CD4-positive, alpha-beta memory T cell (primary cell): ENCODE measurements at regions of chr6 and their contacts with region 1.

Region 1: GRCh38 chr6:12289933-12290820 is at the start of gene EDN1:
- DNase-seq: peak in 4 of 5 donors; percentile 10 to 33 (median 26)
- H3K4me3 ChIP-seq: peak within 1 kb of the TSS; percentile 36 to 38
- H3K4me3 Mint-ChIP-seq: peak within 1 kb of the TSS; percentile 85 to 93 (median 90)
- H3K27ac ChIP-seq: no peak within 1 kb of the TSS
- H3K27ac Mint-ChIP-seq: peak within 1 kb of the TSS in 1 of 7 donors; percentile 7
- H3K4me1 ChIP-seq: peaks cover 12% of the 10 kb centered on the region
- H3K4me1 Mint-ChIP-seq: peaks cover 13 to 18% (median 15%) of the 10 kb centered on the region in 4 donors
- H3K27me3 ChIP-seq: peaks cover 15% of the 10 kb centered on the region
- H3K27me3 Mint-ChIP-seq: peaks cover 27 to 32% of the 10 kb centered on the region in 2 donors
- total RNA-seq, gene EDN1: 0.15 to 0.28 TPM

Region 2: DNA sequence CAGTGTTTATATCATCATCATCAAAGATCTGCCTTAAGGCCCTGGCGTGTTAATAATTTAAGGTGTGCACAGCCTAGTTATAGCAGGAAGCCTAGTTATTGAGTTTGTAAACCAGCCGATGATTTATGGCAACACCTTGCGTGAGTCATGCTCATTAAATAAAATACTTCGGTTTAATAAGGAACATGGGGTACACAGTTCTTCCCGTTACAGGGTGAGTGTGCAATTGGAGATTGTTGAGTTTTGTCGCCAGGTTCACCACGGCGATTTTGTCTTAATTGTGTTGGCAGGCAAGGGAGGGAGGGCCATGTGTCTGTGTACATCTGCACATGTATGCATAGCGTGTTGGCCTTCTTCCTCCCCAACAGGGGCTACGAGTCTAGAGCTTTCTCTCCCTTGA is 1979.4 kb before region 1 on chr6:
- CTCF ChIA-PET with region 1: no interaction called
- POLR2A ChIA-PET with region 1: no interaction called
- intact Hi-C with region 1: no loop called
- DNase-seq: no peak
- H3K4me3 ChIP-seq: no peak overlapping the region
- H3K4me3 Mint-ChIP-seq: no peak overlapping the region
- H3K27ac ChIP-seq: no peak overlapping the region
- H3K27ac Mint-ChIP-seq: no peak overlapping the region
- H3K4me1 ChIP-seq: no peaks in the 10 kb centered on the region
- H3K4me1 Mint-ChIP-seq: no peaks in the 10 kb centered on the region
- H3K27me3 ChIP-seq: no peaks in the 10 kb centered on the region
- H3K27me3 Mint-ChIP-seq: peaks cover 0 to 2% of the 10 kb centered on the region in 2 donors

Region 3: DNA sequence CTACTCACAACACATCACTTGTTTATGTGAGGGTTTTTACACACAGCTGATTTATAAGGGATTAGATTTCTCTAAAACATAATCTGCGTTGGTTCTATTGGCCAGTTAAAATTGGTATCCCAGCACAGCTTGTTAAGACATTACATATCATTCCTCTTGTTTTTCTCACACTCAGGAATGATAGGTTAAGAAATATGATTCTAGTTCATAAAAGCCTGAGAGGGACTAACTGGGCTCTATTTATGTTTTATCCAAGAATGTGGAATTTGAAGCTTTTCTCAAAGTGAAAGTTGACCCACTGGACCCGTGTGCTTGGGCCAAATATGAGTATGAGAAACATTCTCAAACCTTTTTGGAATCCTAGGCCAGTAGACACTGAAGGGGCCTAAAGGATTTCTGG is 635.3 kb before region 1 on chr6:
- CTCF ChIA-PET with region 1: interaction called, 7 read pairs
- POLR2A ChIA-PET with region 1: no interaction called
- intact Hi-C with region 1: loop called (anchors 1 kb)
- DNase-seq: no peak
- H3K4me3 ChIP-seq: no peak overlapping the region
- H3K4me3 Mint-ChIP-seq: no peak overlapping the region
- H3K27ac ChIP-seq: no peak overlapping the region
- H3K27ac Mint-ChIP-seq: no peak overlapping the region
- H3K4me1 ChIP-seq: no peaks in the 10 kb centered on the region
- H3K4me1 Mint-ChIP-seq: peaks cover 0 to 7% (median 2%) of the 10 kb centered on the region in 4 donors
- H3K27me3 ChIP-seq: no peaks in the 10 kb centered on the region
- H3K27me3 Mint-ChIP-seq: peaks cover 8 to 9% of the 10 kb centered on the region in 2 donors

Region 4: GRCh38 chr6:11700118-11700718 is 590.0 kb before region 1 on chr6:
- CTCF ChIA-PET with region 1: interaction called, 6 read pairs
- POLR2A ChIA-PET with region 1: no interaction called
- intact Hi-C with region 1: loop called (anchors 1 kb)
- DNase-seq: peak in 3 of 5 donors; percentile 38 to 51 (median 42)
- H3K4me3 ChIP-seq: no peak overlapping the region
- H3K4me3 Mint-ChIP-seq: no peak overlapping the region
- H3K27ac ChIP-seq: no peak overlapping the region
- H3K27ac Mint-ChIP-seq: peak overlapping the region in 1 of 7 donors; percentile 41
- H3K4me1 ChIP-seq: no peaks in the 10 kb centered on the region
- H3K4me1 Mint-ChIP-seq: peaks cover 0 to 8% (median 4%) of the 10 kb centered on the region in 4 donors
- H3K27me3 ChIP-seq: no peaks in the 10 kb centered on the region
- H3K27me3 Mint-ChIP-seq: no peaks in the 10 kb centered on the region

Region 5: GRCh38 chr6:12150812-12151432 is 139.3 kb before region 1 on chr6:
- CTCF ChIA-PET with region 1: no interaction called
- POLR2A ChIA-PET with region 1: no interaction called
- intact Hi-C with region 1: loop called (anchors 5 kb)
- DNase-seq: peak in 3 of 5 donors; percentile 20 to 23 (median 23)
- H3K4me3 ChIP-seq: no peak overlapping the region
- H3K4me3 Mint-ChIP-seq: no peak overlapping the region
- H3K27ac ChIP-seq: no peak overlapping the region
- H3K27ac Mint-ChIP-seq: no peak overlapping the region
- H3K4me1 ChIP-seq: peaks cover 8% of the 10 kb centered on the region
- H3K4me1 Mint-ChIP-seq: peaks cover 0 to 16% (median 12%) of the 10 kb centered on the region in 4 donors
- H3K27me3 ChIP-seq: no peaks in the 10 kb centered on the region
- H3K27me3 Mint-ChIP-seq: no peaks in the 10 kb centered on the region

Region 6: GRCh38 chr6:12311106-12311505 is 20.9 kb after region 1 on chr6:
- CTCF ChIA-PET with region 1: interaction called, 14 read pairs
- POLR2A ChIA-PET with region 1: no interaction called
- intact Hi-C with region 1: no loop called
- DNase-seq: no peak
- H3K4me3 ChIP-seq: no peak overlapping the region
- H3K4me3 Mint-ChIP-seq: no peak overlapping the region
- H3K27ac ChIP-seq: no peak overlapping the region
- H3K27ac Mint-ChIP-seq: no peak overlapping the region
- H3K4me1 ChIP-seq: no peaks in the 10 kb centered on the region
- H3K4me1 Mint-ChIP-seq: no peaks in the 10 kb centered on the region
- H3K27me3 ChIP-seq: no peaks in the 10 kb centered on the region
- H3K27me3 Mint-ChIP-seq: peaks cover 0 to 6% of the 10 kb centered on the region in 2 donors